Esophagus muscularis mucosa (tissue), 4 donors: ENCODE measurements at regions of chr15 and their contacts with region 1.

Region 1: DNA sequence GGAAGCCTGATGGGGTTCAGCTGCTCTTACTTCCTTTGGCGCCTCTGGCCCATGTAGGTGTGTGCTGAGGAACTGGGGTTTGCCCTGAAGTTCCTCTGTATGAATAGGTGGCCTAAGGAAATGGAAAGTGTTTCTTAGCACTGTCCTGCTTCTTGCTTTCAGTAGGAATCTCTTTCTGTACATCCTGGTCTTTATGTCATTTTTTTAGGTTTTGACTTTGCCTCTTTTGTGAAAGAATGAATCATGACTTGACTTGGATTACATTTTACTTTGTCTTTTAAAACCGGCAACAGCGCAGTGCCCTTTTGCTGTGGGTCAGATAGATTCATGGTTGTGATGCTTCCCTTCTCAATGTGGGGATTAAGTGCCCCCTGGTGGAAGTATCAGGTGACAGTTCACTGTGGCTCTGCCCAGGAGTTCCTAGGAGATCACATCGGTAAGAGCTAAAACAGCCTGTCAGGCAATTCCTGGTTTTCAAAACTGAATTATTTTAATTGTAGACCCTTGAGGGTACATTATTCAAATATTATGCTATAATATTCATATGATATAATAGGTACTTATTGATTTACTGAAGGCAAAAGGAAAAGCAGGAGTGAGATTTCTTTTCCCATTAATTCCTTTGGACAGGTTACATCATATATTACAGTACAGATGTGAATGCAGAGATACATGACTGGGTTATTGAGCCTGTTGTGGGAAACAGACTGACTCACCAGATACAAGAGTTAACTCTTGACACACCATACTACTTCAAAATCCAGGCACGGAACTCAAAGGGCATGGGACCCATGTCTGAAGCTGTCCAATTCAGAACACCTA is 95.4 kb downstream of the HCN4 start:
- DNase-seq: no peak
- H3K4me3 ChIP-seq: no peak overlapping the region
- H3K27ac ChIP-seq: no peak overlapping the region
- H3K4me1 ChIP-seq: peaks cover 0 to 12% (median 5%) of the 10 kb centered on the region in 4 donors
- H3K27me3 ChIP-seq: no peaks in the 10 kb centered on the region
- CTCF ChIP-seq: peak; percentile 72 to 83 (median 78)
- EP300 ChIP-seq: no peak
- POLR2A ChIP-seq: no peak

Region 2: GRCh38 chr15:72796515-72797337 is 476.7 kb before region 1 on chr15:
- intact Hi-C with region 1: loop called (anchors 5 kb)
- DNase-seq: no peak
- H3K4me3 ChIP-seq: peak overlapping the region; percentile 57 to 68 (median 62)
- H3K27ac ChIP-seq: peak overlapping the region in 1 of 4 donors; percentile 53
- H3K4me1 ChIP-seq: peaks cover 9 to 17% (median 14%) of the 10 kb centered on the region in 4 donors
- H3K27me3 ChIP-seq: peaks cover 0 to 13% (median 0%) of the 10 kb centered on the region in 4 donors
- CTCF ChIP-seq: peak; percentile 64 to 84 (median 82)
- EP300 ChIP-seq: no peak
- POLR2A ChIP-seq: no peak

Region 3: DNA sequence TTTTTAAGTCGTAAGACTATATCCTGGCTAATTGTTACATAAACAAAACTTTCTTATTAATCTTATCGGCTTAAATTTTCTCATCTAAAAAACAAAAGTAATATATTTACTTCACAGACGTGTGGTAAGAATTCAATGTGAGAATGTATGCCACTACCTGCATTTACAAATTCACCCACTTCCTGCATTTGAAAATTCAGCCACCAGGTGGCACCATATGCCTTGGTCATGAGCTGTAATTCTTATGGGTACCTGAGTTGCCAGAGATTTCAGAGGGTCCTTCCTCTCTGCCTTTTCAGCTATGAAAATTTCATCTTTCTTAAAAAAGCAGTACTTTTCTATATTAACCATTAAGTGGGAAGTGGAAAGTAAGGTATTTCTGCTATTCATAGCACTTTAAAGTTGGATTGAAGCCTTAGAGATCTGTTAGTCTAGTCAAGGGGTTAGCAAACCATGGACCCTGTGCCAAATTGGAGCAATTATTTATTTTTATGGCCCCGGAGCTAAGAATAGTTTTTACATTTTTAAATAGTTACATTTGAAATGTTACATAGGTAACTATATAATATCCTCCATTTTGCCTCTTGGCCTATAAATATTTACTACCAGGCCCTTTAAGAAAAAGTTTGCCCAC is 32.4 kb before region 1 on chr15:
- intact Hi-C with region 1: loop called (anchors 2 kb)
- DNase-seq: no peak
- H3K4me3 ChIP-seq: no peak overlapping the region
- H3K27ac ChIP-seq: no peak overlapping the region
- H3K4me1 ChIP-seq: peaks cover 0 to 16% (median 12%) of the 10 kb centered on the region in 4 donors
- H3K27me3 ChIP-seq: no peaks in the 10 kb centered on the region
- CTCF ChIP-seq: peak; percentile 84 to 92 (median 84)
- EP300 ChIP-seq: no peak
- POLR2A ChIP-seq: no peak

Region 4: DNA sequence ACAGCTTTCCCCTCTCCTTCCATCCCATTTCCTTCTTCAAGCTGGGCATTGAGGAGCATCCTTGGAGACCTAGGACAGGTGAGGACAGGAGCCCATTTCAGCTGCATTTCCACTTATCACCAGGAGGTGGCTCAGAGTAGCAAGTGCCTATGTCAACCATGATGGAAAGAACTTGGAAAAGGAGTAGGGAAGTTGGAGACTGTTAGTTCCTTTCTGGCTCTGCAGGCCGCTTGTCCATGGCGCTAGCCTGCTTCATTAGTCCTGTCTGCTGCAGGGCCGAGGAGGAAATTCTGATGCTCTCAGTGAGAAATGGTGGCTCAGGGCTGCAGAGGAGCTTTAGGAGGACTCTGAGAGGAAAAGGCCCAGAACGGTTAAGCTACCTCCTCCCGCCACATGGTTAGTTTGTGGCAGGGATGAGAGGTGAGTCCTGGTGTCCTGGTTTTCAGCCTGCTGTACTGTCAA is 403.8 kb after region 1 on chr15:
- intact Hi-C with region 1: no loop called
- DNase-seq: peak; percentile 91
- H3K4me3 ChIP-seq: no peak overlapping the region
- H3K27ac ChIP-seq: no peak overlapping the region
- H3K4me1 ChIP-seq: peaks cover 0 to 7% (median 3%) of the 10 kb centered on the region in 4 donors
- H3K27me3 ChIP-seq: peaks cover 0 to 14% (median 0%) of the 10 kb centered on the region in 4 donors
- CTCF ChIP-seq: peak; percentile 91 to 95 (median 93)
- EP300 ChIP-seq: no peak
- POLR2A ChIP-seq: no peak